GM12878 (cell line): ENCODE measurements at regions of chr7 and their contacts with region 1.

Region 1: GRCh38 chr7:120554960-120555571 is 282.1 kb downstream of the KCND2 start:
- DNase-seq: peak; percentile 45
- ATAC-seq: peak; percentile 85
- H3K4me3 ChIP-seq: no peak overlapping the region
- H3K27ac ChIP-seq: no peak overlapping the region
- H3K4me1 ChIP-seq: peaks cover 14% of the 10 kb centered on the region
- H3K27me3 ChIP-seq: no peaks in the 10 kb centered on the region
- CTCF ChIP-seq: peak; percentile 66 to 89 (median 69)
- EP300 ChIP-seq: no peak
- POLR2A ChIP-seq: no peak
- RAD21 ChIP-seq: peak; percentile 98

Region 2: DNA sequence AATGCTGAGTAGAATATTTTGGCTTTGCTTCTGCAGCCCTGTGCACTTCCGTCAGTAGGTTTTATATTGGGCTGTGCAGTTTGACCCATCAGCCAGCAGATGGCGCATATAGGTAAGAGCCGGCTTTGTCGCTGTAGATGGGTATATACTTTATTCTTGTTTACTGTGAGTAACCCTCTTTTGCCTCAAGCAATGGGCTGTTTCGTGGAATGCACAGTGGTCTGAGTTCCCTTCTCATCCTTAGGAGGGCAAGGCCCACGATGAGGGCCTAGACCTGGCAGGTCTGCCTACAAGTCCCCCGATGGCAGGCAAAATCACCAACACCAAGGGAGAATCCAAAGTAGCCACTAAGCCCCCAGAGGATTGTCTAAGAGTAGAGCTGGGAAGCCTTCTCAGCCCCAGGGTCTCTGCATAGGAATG is 1285.0 kb before region 1 on chr7:
- CTCF ChIA-PET with region 1: no interaction called
- POLR2A ChIA-PET with region 1: no interaction called
- RAD21 ChIA-PET with region 1: no interaction called
- SMC1A ChIA-PET with region 1: no interaction called
- in situ Hi-C with region 1: loop called (anchors 25 kb)
- intact Hi-C with region 1: loop called (anchors 5 kb)
- DNase-seq: no peak
- ATAC-seq: peak; percentile 98
- H3K4me3 ChIP-seq: no peak overlapping the region
- H3K27ac ChIP-seq: no peak overlapping the region
- H3K4me1 ChIP-seq: no peaks in the 10 kb centered on the region
- H3K27me3 ChIP-seq: no peaks in the 10 kb centered on the region
- CTCF ChIP-seq: peak; percentile 78 to 89 (median 87)
- EP300 ChIP-seq: no peak
- POLR2A ChIP-seq: no peak
- RAD21 ChIP-seq: peak; percentile 74

Region 3: GRCh38 chr7:120064565-120064964 is 490.5 kb before region 1 on chr7:
- CTCF ChIA-PET with region 1: no interaction called
- POLR2A ChIA-PET with region 1: no interaction called
- RAD21 ChIA-PET with region 1: no interaction called
- SMC1A ChIA-PET with region 1: interaction called, 3 read pairs
- in situ Hi-C with region 1: no loop called
- intact Hi-C with region 1: loop called (anchors 10 kb)
- DNase-seq: peak; percentile 35
- ATAC-seq: peak; percentile 83
- H3K4me3 ChIP-seq: no peak overlapping the region
- H3K27ac ChIP-seq: no peak overlapping the region
- H3K4me1 ChIP-seq: peaks cover 11% of the 10 kb centered on the region
- H3K27me3 ChIP-seq: no peaks in the 10 kb centered on the region
- CTCF ChIP-seq: no peak
- EP300 ChIP-seq: 0 out of 4 replicates have a peak, but pooled peaks of 1 of the 2 experiments have one; percentile 26
- POLR2A ChIP-seq: no peak
- RAD21 ChIP-seq: no peak

Region 4: GRCh38 chr7:120272261-120272660 is 282.8 kb before region 1 on chr7:
- CTCF ChIA-PET with region 1: interaction called, 20 read pairs
- POLR2A ChIA-PET with region 1: interaction called, 3 read pairs
- RAD21 ChIA-PET with region 1: interaction called, 7 read pairs
- SMC1A ChIA-PET with region 1: interaction called, 22 read pairs
- in situ Hi-C with region 1: loop called (anchors 5 kb)
- intact Hi-C with region 1: loop called (anchors 1 kb)
- DNase-seq: peak; percentile 27
- ATAC-seq: peak; percentile 63
- H3K4me3 ChIP-seq: peak overlapping the region; percentile 82
- H3K27ac ChIP-seq: peak overlapping the region; percentile 64; the same call in 1 of the 2 replicates
- H3K4me1 ChIP-seq: no peaks in the 10 kb centered on the region
- H3K27me3 ChIP-seq: no peaks in the 10 kb centered on the region
- CTCF ChIP-seq: peak; percentile 71 to 82 (median 75)
- EP300 ChIP-seq: no peak
- POLR2A ChIP-seq: no peak
- RAD21 ChIP-seq: peak; percentile 92

Region 5: DNA sequence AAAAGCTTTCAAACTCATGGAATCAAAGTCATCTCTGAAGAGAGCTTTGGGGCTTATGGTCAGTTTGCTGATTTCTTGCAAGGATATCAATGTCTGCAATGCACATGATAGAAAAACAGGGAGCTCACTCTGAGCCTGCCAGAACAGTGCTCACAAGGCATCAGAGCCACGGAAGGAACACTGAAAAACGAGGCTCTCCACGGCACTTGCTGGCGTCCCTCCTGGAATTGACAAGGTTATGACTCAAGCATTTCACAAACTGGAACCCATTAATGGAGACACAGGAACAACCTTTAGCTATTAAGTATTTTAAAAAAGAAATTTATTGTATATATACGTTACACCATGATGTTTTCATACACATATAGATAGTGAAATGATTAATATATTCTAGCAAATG is 15.7 kb before region 1 on chr7:
- CTCF ChIA-PET with region 1: interaction called, 14 read pairs
- POLR2A ChIA-PET with region 1: interaction called, 3 read pairs
- RAD21 ChIA-PET with region 1: no interaction called
- SMC1A ChIA-PET with region 1: interaction called, 15 read pairs
- in situ Hi-C with region 1: no loop called
- intact Hi-C with region 1: no loop called
- DNase-seq: no peak
- ATAC-seq: no peak
- H3K4me3 ChIP-seq: no peak overlapping the region
- H3K27ac ChIP-seq: no peak overlapping the region
- H3K4me1 ChIP-seq: no peaks in the 10 kb centered on the region
- H3K27me3 ChIP-seq: no peaks in the 10 kb centered on the region
- CTCF ChIP-seq: no peak
- EP300 ChIP-seq: no peak
- POLR2A ChIP-seq: no peak
- RAD21 ChIP-seq: no peak